MCF 10A (cell line): ENCODE measurements at regions of chr1 and their contacts with region 1.

Region 1: DNA sequence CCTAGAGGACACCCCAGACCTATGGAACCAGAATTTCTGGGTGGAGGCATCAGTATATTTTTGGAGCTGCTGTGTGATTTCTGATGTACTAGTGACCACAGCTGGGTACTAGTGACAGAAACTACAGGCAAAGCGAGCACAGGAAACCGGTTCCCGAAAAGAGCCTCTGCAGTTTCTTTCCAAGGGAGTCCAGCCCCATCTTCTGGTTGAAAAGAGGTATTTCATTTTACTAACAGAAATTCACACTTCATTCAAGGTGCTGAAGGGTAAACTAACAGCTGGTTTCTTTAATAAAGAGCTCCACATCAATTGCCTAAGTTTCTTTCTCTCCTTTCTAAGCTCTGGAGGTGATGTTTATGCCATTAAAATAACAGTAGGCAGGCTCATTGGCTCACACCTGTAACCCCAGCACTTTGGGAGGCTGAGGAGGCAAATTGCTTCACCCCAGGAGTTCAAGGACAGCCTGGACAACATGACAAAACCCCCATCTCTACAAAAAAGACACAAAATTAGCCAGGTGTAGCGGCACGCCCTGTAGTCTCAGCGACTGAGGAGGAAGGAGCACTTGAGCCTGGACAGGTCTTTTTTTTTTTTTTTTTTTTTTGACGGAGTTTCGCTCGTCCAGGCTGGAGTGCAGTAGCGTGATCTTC is 22.0 kb downstream of the THAP3 start:
- DNase-seq: peak; percentile 48
- H3K4me3 Mint-ChIP-seq: no peak overlapping the region
- H3K27ac Mint-ChIP-seq: no peak overlapping the region
- H3K4me1 Mint-ChIP-seq: no peaks in the 10 kb centered on the region
- H3K27me3 Mint-ChIP-seq: no peaks in the 10 kb centered on the region
- CTCF ChIP-seq: peak; percentile 47

Region 2: GRCh38 chr1:6440258-6441126 is 206.1 kb before region 1 on chr1:
- CTCF ChIA-PET with region 1: no interaction called
- POLR2A ChIA-PET with region 1: no interaction called
- intact Hi-C with region 1: no loop called
- DNase-seq: peak; percentile 55
- H3K4me3 Mint-ChIP-seq: no peak overlapping the region
- H3K27ac Mint-ChIP-seq: no peak overlapping the region
- H3K4me1 Mint-ChIP-seq: peaks cover 18% of the 10 kb centered on the region
- H3K27me3 Mint-ChIP-seq: no peaks in the 10 kb centered on the region
- CTCF ChIP-seq: peak; percentile 13

Region 3: DNA sequence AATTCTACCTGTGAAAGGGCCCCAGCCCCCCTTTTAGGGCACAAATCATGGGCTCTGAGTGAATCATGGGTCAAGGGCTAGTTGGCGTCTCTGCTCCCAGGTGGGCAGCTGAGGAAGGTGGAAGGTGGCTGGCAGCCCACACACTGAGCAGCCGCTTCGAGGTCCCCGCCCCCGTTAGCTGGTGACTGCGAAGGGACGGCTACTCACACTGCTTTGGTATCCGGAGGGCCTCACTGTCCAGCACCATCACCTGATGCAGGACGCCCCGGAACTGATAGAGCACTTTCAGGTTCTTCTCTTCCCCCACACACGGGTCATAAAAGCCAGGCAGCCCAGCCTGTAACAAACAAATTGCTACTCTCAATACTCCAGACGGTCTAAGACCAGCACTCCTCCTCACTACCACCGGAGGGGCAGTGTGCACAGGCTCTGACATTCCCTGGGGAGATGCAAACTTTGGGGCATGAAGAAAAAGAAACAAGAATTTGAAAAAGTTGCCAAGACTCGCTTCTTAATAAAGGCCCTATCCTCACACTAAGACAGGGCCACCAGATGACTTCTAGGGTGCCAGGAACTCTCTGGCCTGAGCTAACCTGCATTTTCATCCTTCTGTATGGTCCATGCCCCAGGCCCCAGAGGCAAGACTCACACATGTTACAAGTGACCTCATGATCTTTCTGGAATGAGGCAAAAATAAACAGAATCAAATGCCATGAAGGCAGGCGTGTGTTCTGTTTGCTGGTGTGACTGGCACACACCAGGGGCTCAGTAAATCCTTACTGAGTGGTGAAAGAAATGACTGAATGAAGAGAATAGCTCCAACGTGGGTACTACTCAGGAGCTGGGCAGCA is 10.5 kb before region 1 on chr1:
- CTCF ChIA-PET with region 1: interaction called, 12 read pairs
- POLR2A ChIA-PET with region 1: interaction called, 3 read pairs
- intact Hi-C with region 1: no loop called
- DNase-seq: no peak
- H3K4me3 Mint-ChIP-seq: no peak overlapping the region
- H3K27ac Mint-ChIP-seq: no peak overlapping the region
- H3K4me1 Mint-ChIP-seq: no peaks in the 10 kb centered on the region
- H3K27me3 Mint-ChIP-seq: no peaks in the 10 kb centered on the region
- CTCF ChIP-seq: no peak

Region 4: DNA sequence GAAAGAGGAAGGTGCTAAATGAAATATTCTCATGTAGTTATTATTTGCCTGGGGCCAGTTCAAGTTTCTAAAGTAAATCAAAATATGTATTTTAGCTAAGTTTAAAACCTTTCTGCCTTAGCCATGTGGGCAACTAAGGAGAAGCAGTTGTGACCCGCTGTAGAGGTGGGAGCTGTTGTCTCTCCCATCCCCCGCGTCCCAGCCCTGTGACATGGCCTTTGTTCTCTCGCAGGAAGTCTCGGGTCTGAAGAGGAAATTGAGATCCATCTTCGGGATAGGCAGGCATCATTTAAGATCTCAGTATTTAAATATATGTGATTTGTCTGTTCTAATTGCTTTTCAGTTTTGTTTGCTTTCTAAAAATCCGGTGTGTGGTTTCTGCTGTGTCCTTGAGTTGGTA is 260.2 kb after region 1 on chr1:
- CTCF ChIA-PET with region 1: no interaction called
- POLR2A ChIA-PET with region 1: no interaction called
- intact Hi-C with region 1: no loop called
- DNase-seq: no peak
- H3K4me3 Mint-ChIP-seq: no peak overlapping the region
- H3K27ac Mint-ChIP-seq: no peak overlapping the region
- H3K4me1 Mint-ChIP-seq: no peaks in the 10 kb centered on the region
- H3K27me3 Mint-ChIP-seq: peaks cover 11% of the 10 kb centered on the region
- CTCF ChIP-seq: no peak